K562 (cell line): ENCODE measurements at regions of chr7 and their contacts with region 1.

Region 1: DNA sequence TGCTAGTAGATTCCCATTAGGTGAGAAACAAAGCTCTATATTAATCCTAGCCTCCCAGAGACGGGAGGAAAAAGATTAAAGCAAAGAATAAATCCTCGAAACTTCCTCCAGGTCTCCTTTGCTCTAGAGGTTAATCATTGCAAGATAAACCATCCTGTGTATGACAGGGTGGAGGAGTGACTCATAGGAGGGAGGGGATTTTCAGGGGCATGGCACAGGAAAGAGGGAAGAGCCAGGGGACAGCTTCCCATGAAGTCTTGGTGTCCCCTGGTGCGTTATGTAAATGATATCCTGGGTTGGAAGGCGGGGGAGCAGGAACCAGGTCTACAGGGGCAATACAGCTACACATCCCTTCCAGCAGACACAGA is 780 bp downstream of the CYP3A5 start:
- DNase-seq: peak; percentile 51 to 77 (median 63)
- ATAC-seq: peak; percentile 84
- H3K4me3 ChIP-seq: no peak overlapping the region
- H3K27ac ChIP-seq: peak overlapping the region; percentile 54
- H3K4me1 ChIP-seq: peaks cover 14 to 25% of the 10 kb centered on the region in 2 experiments; a peak in 4 of 5 replicates
- H3K27me3 ChIP-seq: no peaks in the 10 kb centered on the region
- CTCF ChIP-seq: no peak
- EP300 ChIP-seq: peak; percentile 45; the same call in 1 of the 2 replicates
- POLR2A ChIP-seq: no peak
- RAD21 ChIP-seq: no peak

Region 2: DNA sequence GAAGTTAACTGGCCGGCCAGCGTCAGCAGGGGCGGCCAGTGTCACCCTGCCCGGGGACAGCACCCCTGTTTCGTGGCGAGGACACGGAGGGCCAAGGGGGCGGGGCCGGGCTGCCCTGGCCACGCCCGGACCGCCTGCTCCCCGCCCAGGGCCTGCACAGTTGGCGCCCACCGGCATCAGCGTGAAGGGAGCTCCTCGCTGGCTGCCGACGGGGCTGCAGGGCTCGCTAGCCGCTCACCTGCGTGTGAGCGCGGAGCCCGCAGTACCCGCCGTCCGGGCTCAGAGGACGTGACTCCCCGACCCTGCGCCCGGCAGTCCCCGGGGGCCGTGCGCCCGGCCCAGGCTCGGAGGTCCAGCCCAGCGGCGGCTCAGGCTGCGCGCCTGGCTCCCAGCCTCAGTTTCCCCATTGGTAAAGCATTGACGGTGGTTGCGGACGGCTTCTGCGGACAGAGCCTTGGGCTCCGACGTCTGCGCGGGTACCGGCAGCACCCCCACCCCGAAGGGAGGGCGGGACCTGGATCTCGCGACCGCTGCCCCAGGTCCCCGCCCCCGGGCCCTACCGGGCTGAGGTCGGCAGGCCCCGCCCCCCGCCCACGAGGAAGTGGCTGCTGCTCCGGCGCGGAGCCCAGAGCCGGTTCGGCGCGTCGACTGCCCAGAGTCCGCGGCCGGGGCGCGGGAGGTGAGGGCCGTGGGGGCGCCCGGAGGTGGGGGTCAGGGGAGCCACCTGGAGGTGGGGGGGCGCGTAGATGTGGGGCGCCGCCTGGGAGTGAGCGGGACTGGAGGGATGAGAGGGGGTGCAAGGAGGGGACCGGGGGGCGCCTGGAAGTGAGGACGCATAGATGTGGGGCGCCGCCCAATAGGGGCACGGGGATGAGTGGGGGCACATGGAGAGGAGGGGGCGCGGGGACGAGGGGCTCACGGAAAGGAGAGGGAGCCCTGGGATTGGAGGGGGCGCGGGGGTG is 304.6 kb before region 1 on chr7 and contains the start of gene ARPC1B:
- CTCF ChIA-PET with region 1: no interaction called
- POLR2A ChIA-PET with region 1: no interaction called
- in situ Hi-C with region 1: no loop called
- intact Hi-C with region 1: no loop called
- DNase-seq: peak; percentile 93 to 99 (median 98)
- ATAC-seq: peak; percentile 88
- H3K4me3 ChIP-seq: peak within 1 kb of the TSS; percentile 94
- H3K27ac ChIP-seq: peak within 1 kb of the TSS; percentile 74
- H3K4me1 ChIP-seq: peaks cover 25 to 58% of the 10 kb centered on the region in 2 experiments
- H3K27me3 ChIP-seq: no peaks in the 10 kb centered on the region
- CTCF ChIP-seq: no peak
- EP300 ChIP-seq: no peak
- POLR2A ChIP-seq: peak; percentile 84
- RAD21 ChIP-seq: no peak
- polyA plus RNA-seq, gene ARPC1B: 6.7 to 38.7 TPM

Region 3: GRCh38 chr7:99665312-99666012 is 13.6 kb before region 1 on chr7:
- CTCF ChIA-PET with region 1: no interaction called
- POLR2A ChIA-PET with region 1: interaction called, 12 read pairs
- in situ Hi-C with region 1: no loop called
- intact Hi-C with region 1: no loop called
- DNase-seq: peak; percentile 76 to 99 (median 88)
- ATAC-seq: peak; percentile 98
- H3K4me3 ChIP-seq: no peak overlapping the region
- H3K27ac ChIP-seq: peak overlapping the region; percentile 22; the same call in 1 of the 3 replicates
- H3K4me1 ChIP-seq: peaks cover 11 to 34% of the 10 kb centered on the region in 2 experiments; a peak in 4 of 5 replicates
- H3K27me3 ChIP-seq: no peaks in the 10 kb centered on the region
- CTCF ChIP-seq: peak in 2 of 3 experiments; percentile 12 to 59; a peak in 2 of 6 replicates
- EP300 ChIP-seq: peak; percentile 96
- POLR2A ChIP-seq: no peak
- RAD21 ChIP-seq: peak; percentile 29 to 72

Region 4: DNA sequence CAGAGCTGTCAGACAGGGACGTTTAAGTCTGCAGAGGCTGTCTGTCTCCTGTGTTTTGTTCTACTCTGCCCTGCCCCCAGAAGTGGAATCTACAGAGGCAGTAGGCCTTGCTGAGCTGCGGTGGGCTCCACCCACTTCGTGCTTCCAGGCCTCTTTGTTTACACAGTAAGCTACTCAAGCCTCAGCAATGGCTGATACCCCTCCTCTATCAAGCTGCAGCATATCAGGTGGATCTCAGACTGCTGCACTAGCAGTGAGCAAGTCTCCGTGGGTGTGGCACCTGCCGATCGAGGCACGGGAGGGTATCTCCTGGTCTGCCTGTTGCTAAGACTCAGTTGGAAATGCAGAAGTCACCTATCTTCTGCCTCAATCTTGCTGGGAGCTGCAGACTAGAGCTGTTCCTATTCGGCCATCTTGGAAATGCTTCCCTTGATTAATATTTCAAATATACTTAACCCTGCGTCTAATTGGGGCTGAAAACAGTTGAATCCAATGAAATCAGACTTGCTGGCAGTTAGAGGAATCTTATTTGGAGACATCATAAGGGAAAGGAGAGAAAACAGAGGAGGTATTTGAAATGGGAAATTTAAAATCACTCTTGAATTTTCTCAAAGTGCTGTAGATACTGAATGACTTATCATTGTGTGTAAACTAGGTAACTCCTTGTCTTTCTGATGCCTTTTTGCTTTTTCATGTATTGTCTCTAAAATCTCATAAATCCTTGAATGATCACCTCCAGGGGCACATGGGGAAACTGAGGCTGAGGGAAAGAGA is 14.6 kb after region 1 on chr7:
- CTCF ChIA-PET with region 1: no interaction called
- POLR2A ChIA-PET with region 1: interaction called, 26 read pairs
- in situ Hi-C with region 1: no loop called
- intact Hi-C with region 1: loop called (anchors 2 kb)
- DNase-seq: peak; percentile 78 to 95 (median 82)
- ATAC-seq: peak; percentile 96
- H3K4me3 ChIP-seq: peak overlapping the region; percentile 0; the same call in 1 of the 2 replicates
- H3K27ac ChIP-seq: peak overlapping the region; percentile 66
- H3K4me1 ChIP-seq: peaks cover 14 to 34% of the 10 kb centered on the region in 2 experiments
- H3K27me3 ChIP-seq: no peaks in the 10 kb centered on the region
- CTCF ChIP-seq: no peak
- EP300 ChIP-seq: peak; percentile 74
- POLR2A ChIP-seq: no peak
- RAD21 ChIP-seq: no peak

Region 5: DNA sequence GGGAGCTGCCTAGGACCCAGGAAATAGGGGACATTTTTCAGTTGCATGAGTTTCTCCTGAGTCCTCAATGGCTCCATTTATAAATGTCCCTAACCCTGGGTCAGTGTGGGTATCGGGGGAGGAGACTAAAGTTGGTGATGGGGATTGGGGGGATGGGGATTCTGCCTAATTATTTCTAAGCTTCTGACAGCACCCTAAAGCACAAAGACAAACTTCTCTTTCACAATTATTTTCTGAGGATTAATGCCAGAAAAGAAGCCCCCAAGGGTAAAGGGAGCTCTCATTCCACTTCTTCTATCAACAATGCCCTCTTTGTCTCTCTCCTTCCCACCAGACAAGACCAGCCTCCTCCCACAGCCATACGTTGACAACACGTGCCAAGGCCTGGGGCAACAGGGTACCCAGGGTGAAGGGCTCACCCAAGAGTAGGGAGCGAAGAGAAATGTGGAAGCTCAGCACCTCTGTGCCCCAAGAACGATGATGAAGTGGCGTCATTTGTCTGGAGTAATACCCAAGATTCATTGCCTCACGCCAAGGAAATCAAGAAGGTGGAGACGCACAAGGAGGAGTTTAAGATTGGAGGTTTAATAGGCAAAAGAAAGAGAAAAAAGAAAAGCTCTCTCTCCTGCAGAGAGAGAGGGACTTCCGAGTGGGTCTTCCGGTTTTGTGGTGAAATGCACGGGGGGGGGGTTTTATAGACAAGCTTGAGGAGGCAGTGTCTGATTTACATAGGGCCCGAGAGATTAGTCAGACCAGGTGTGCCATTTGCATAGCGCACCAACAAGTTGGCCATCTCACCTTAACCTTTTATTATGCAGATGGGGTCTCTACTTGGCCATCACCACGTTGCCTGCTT is 264.9 kb after region 1 on chr7:
- CTCF ChIA-PET with region 1: no interaction called
- POLR2A ChIA-PET with region 1: no interaction called
- in situ Hi-C with region 1: no loop called
- intact Hi-C with region 1: no loop called
- DNase-seq: no peak
- ATAC-seq: no peak
- H3K4me3 ChIP-seq: peak overlapping the region; percentile 10; the same call in 1 of the 2 replicates
- H3K27ac ChIP-seq: no peak overlapping the region
- H3K4me1 ChIP-seq: no peaks in the 10 kb centered on the region; a peak in 1 of 5 replicates
- H3K27me3 ChIP-seq: peaks cover 0 to 4% of the 10 kb centered on the region in 2 experiments; a peak in 1 of 5 replicates
- CTCF ChIP-seq: no peak
- EP300 ChIP-seq: no peak
- POLR2A ChIP-seq: no peak
- RAD21 ChIP-seq: no peak

Region 6: DNA sequence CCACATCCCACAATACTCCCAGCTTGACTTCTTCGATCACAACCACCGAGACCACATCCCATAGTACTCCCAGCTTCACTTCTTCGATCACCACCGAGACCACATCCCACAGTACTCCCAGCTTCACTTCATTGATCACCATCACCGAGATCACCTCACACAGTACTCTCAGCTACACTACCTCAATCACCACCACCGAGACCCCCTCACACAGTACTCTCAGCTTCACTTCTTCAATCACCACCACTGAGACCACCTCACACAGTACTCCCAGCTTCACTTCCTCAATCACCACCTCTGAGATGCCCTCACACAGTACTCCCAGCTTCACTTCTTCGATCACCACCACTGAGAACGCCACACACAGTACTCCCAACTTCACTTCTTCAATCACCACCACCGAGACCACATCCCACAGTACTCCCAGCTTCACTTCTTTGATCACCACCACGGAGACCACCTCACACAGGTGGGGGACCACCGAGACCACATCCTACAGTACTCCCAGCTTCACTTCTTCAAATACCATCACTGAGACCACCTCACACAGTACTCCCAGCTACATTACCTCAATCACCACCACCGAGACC is 1278.9 kb after region 1 on chr7:
- CTCF ChIA-PET with region 1: no interaction called
- POLR2A ChIA-PET with region 1: no interaction called
- in situ Hi-C with region 1: no loop called
- intact Hi-C with region 1: no loop called
- DNase-seq: peak in 3 of 4 experiments; percentile 49 to 59 (median 59)
- ATAC-seq: no peak
- H3K4me3 ChIP-seq: no peak overlapping the region
- H3K27ac ChIP-seq: no peak overlapping the region
- H3K4me1 ChIP-seq: no peaks in the 10 kb centered on the region
- H3K27me3 ChIP-seq: peaks cover 27 to 60% of the 10 kb centered on the region in 2 experiments; a peak in 4 of 5 replicates
- CTCF ChIP-seq: no peak
- EP300 ChIP-seq: no peak
- POLR2A ChIP-seq: no peak
- RAD21 ChIP-seq: no peak